CD4-positive, alpha-beta memory T cell (primary cell): ENCODE measurements at regions of chr6 and their contacts with region 1.

Region 1: DNA sequence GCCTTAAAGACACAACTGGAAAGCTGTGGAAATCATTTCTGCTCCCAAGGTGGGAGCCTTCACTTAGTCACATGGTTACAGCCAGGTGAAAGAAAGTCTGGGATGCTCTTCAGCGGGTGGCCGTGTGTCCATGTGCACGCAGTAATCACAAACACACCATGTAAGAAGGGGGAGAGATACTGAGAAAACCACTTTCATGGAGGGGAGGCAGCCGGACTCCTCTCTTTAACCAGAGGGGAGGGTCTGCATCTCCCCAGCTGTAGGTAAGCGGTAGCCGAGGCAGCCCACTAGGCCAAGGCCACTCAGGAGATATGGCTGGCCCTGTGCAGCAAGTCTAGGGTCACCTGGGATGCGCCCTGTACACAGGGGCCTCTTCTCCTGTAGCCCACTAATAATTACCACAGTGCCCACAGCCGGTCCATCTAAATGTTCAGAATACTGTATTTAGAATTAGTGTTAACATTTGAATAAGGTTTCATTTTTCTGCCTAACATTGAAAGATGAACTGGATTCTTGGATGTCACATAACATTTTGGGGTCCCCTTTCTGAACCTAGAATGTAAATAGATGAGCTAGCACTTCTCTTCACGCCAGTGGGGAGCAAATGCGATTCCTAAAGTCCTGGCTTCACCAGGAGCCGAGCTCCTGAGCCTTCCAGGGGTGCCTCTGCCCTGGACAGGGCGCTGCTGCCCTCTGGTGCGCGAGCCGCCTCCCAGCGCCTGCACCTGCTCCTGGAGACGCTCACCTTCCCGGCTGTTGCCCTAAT is 15.9 kb downstream of the GPR31 start:
- DNase-seq: peak in 4 of 5 donors; percentile 54 to 62 (median 56)
- H3K4me3 ChIP-seq: no peak overlapping the region
- H3K4me3 Mint-ChIP-seq: peak overlapping the region in 2 of 8 donors; percentile 63 to 69
- H3K27ac ChIP-seq: no peak overlapping the region
- H3K27ac Mint-ChIP-seq: peak overlapping the region; percentile 72 to 91 (median 81)
- H3K4me1 ChIP-seq: peaks cover 17% of the 10 kb centered on the region
- H3K4me1 Mint-ChIP-seq: peaks cover 24 to 51% (median 29%) of the 10 kb centered on the region in 4 donors
- H3K27me3 ChIP-seq: no peaks in the 10 kb centered on the region
- H3K27me3 Mint-ChIP-seq: peaks cover 0 to 2% of the 10 kb centered on the region in 2 donors

Region 2: GRCh38 chr6:166775180-166776081 is 366.4 kb before region 1 on chr6:
- CTCF ChIA-PET with region 1: interaction called, 37 read pairs
- POLR2A ChIA-PET with region 1: no interaction called
- intact Hi-C with region 1: loop called (anchors 1 kb)
- DNase-seq: peak; percentile 68 to 76 (median 73)
- H3K4me3 ChIP-seq: no peak overlapping the region
- H3K4me3 Mint-ChIP-seq: no peak overlapping the region
- H3K27ac ChIP-seq: no peak overlapping the region
- H3K27ac Mint-ChIP-seq: no peak overlapping the region
- H3K4me1 ChIP-seq: peaks cover 5% of the 10 kb centered on the region
- H3K4me1 Mint-ChIP-seq: peaks cover 0 to 5% (median 3%) of the 10 kb centered on the region in 4 donors
- H3K27me3 ChIP-seq: no peaks in the 10 kb centered on the region
- H3K27me3 Mint-ChIP-seq: peaks cover 2 to 6% of the 10 kb centered on the region in 2 donors

Region 3: GRCh38 chr6:166921570-166921969 is 220.3 kb before region 1 on chr6:
- CTCF ChIA-PET with region 1: no interaction called
- POLR2A ChIA-PET with region 1: no interaction called
- intact Hi-C with region 1: no loop called
- DNase-seq: no peak
- H3K4me3 ChIP-seq: no peak overlapping the region
- H3K4me3 Mint-ChIP-seq: no peak overlapping the region
- H3K27ac ChIP-seq: no peak overlapping the region
- H3K27ac Mint-ChIP-seq: no peak overlapping the region
- H3K4me1 ChIP-seq: no peaks in the 10 kb centered on the region
- H3K4me1 Mint-ChIP-seq: peaks cover 0 to 5% (median 2%) of the 10 kb centered on the region in 4 donors
- H3K27me3 ChIP-seq: no peaks in the 10 kb centered on the region
- H3K27me3 Mint-ChIP-seq: no peaks in the 10 kb centered on the region

Region 4: DNA sequence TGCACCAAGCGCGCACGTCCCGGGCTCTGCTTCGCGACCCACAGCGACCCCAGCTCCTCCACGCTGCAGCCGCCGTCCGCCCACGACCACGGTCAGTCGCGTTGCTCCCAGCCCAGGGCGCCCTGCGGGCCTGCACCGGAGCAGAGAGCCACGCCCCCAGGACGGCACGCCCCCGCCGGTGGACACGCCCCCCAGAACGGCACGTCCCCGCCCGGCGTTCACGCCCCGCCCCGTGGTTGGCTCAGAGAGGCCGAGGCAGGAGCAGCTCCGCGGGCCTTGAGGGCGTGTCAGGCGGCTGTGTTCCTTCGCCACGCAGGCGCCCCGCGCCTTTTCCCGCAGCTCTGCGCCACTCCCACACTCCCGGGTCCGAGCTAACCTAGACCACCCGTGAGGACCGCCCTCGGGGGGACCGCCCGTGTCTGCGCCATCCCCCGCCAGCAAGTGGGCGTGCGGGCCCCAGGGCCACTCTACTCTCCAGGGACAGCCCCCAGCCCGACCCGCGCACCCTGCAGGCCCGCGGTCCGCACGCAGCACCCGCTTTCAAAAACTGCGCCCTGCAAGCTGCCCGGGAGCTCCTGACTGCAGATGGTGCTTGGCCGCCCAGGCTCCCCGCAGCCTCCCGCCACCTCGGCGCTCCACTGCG is 185.3 kb before region 1 on chr6 and contains the start of gene RNASET2:
- CTCF ChIA-PET with region 1: interaction called, 9 read pairs
- POLR2A ChIA-PET with region 1: interaction called, 15 read pairs
- intact Hi-C with region 1: no loop called
- DNase-seq: peak; percentile 96 to 100 (median 97)
- H3K4me3 ChIP-seq: peak within 1 kb of the TSS; percentile 68 to 95
- H3K4me3 Mint-ChIP-seq: peak within 1 kb of the TSS; percentile 91 to 100 (median 97)
- H3K27ac ChIP-seq: peak within 1 kb of the TSS; percentile 92
- H3K27ac Mint-ChIP-seq: peak within 1 kb of the TSS; percentile 94 to 100 (median 98)
- H3K4me1 ChIP-seq: peaks cover 67% of the 10 kb centered on the region
- H3K4me1 Mint-ChIP-seq: peaks cover 57 to 79% (median 67%) of the 10 kb centered on the region in 4 donors
- H3K27me3 ChIP-seq: no peaks in the 10 kb centered on the region
- H3K27me3 Mint-ChIP-seq: no peaks in the 10 kb centered on the region
- total RNA-seq, gene RNASET2: 296 to 306 TPM

Region 5: GRCh38 chr6:167005350-167006159 is 136.3 kb before region 1 on chr6:
- CTCF ChIA-PET with region 1: interaction called, 40 read pairs
- POLR2A ChIA-PET with region 1: interaction called, 3 read pairs
- intact Hi-C with region 1: no loop called
- DNase-seq: no peak
- H3K4me3 ChIP-seq: no peak overlapping the region
- H3K4me3 Mint-ChIP-seq: no peak overlapping the region
- H3K27ac ChIP-seq: no peak overlapping the region
- H3K27ac Mint-ChIP-seq: no peak overlapping the region
- H3K4me1 ChIP-seq: peaks cover 21% of the 10 kb centered on the region
- H3K4me1 Mint-ChIP-seq: peaks cover 14 to 25% (median 20%) of the 10 kb centered on the region in 4 donors
- H3K27me3 ChIP-seq: no peaks in the 10 kb centered on the region
- H3K27me3 Mint-ChIP-seq: no peaks in the 10 kb centered on the region

Region 6: DNA sequence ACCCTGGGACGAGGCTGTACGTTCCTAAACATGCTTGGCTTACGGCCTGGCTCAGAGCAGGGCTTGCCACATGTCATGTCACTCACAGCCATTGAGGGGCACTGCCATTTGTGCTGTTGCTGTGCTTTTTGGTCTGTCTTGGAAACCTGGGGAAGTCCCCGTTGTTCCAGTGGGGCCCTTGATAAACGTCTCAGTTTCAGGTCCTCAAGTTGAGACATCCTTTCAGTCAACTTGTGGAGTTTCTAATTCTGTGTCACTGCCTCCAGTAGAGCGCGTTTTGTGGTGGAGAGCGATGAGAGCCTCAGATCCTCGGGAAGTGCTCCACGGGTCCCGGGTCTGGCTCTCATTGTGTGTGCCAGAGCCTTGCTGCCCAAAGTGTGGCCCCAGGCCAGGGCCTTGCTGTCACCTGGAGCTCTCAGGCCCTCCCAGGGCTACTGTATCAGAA is 62.0 kb before region 1 on chr6:
- CTCF ChIA-PET with region 1: interaction called, 8 read pairs
- POLR2A ChIA-PET with region 1: no interaction called
- intact Hi-C with region 1: loop called (anchors 1 kb)
- DNase-seq: peak; percentile 65 to 80 (median 73)
- H3K4me3 ChIP-seq: peak overlapping the region in 1 of 2 donors; percentile 21
- H3K4me3 Mint-ChIP-seq: peak overlapping the region; percentile 1 to 74 (median 62)
- H3K27ac ChIP-seq: peak overlapping the region; percentile 26
- H3K27ac Mint-ChIP-seq: peak overlapping the region in 6 of 7 donors; percentile 77 to 92 (median 84)
- H3K4me1 ChIP-seq: peaks cover 17% of the 10 kb centered on the region
- H3K4me1 Mint-ChIP-seq: peaks cover 16 to 22% (median 20%) of the 10 kb centered on the region in 4 donors
- H3K27me3 ChIP-seq: no peaks in the 10 kb centered on the region
- H3K27me3 Mint-ChIP-seq: no peaks in the 10 kb centered on the region

Region 7: DNA sequence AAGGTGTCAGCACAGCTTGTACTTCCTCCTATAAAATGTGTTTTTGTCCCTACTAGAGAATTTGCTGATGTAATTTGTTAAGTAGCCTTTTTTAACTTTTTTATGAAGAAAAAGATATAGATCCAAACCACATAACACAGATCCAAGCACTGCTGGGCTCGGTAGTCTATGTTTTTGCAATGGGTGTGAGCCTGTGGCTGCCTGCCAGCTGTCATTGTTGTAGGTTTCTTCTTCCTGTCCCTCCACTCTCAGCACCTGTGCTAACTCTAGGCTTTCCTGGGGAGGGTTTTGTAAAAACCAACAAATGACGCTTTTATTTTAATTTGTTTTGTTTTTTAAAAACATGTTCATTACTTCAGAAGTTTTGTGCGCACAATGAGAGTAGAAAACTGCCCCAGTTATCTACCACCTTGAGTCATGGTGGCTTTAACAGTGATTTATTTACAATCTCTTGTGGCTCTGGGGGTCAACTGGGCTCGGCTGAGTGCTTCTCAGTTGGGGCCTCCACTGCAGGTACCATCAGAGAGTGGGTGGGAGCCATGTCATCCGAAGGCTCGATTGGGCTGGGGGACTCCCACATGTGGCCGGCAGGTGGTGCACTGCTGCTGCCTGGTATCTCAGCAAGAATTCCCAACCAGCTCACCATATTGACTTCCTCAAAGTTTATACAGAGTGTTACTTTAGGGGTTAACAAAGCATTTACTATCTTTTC is 22.0 kb before region 1 on chr6:
- CTCF ChIA-PET with region 1: interaction called, 83 read pairs
- POLR2A ChIA-PET with region 1: interaction called, 21 read pairs
- intact Hi-C with region 1: loop called (anchors 2 kb)
- DNase-seq: peak; percentile 85 to 91 (median 87)
- H3K4me3 ChIP-seq: peak overlapping the region in 1 of 2 donors; percentile 40
- H3K4me3 Mint-ChIP-seq: peak overlapping the region; percentile 65 to 85 (median 73)
- H3K27ac ChIP-seq: peak overlapping the region; percentile 63
- H3K27ac Mint-ChIP-seq: peak overlapping the region; percentile 94 to 98 (median 95)
- H3K4me1 ChIP-seq: peaks cover 85% of the 10 kb centered on the region
- H3K4me1 Mint-ChIP-seq: peaks cover 68 to 95% (median 79%) of the 10 kb centered on the region in 4 donors
- H3K27me3 ChIP-seq: no peaks in the 10 kb centered on the region
- H3K27me3 Mint-ChIP-seq: peaks cover 0 to 1% of the 10 kb centered on the region in 2 donors

Region 8: GRCh38 chr6:167855825-167856425 is 714.1 kb after region 1 on chr6:
- CTCF ChIA-PET with region 1: no interaction called
- POLR2A ChIA-PET with region 1: no interaction called
- intact Hi-C with region 1: no loop called
- DNase-seq: no peak
- H3K4me3 ChIP-seq: no peak overlapping the region
- H3K4me3 Mint-ChIP-seq: no peak overlapping the region
- H3K27ac ChIP-seq: no peak overlapping the region
- H3K27ac Mint-ChIP-seq: no peak overlapping the region
- H3K4me1 ChIP-seq: no peaks in the 10 kb centered on the region
- H3K4me1 Mint-ChIP-seq: peaks cover 8 to 19% (median 9%) of the 10 kb centered on the region in 4 donors
- H3K27me3 ChIP-seq: no peaks in the 10 kb centered on the region
- H3K27me3 Mint-ChIP-seq: peaks cover 0 to 2% of the 10 kb centered on the region in 2 donors